KBM-7 (cell line): ENCODE measurements at regions of chr6 and their contacts with region 1.

Region 1: GRCh38 chr6:130885392-130886192 is 58.4 kb downstream of the SMLR1 start:
- DNase-seq: peak; percentile 81

Region 2: GRCh38 chr6:130587778-130588520 is 297.6 kb before region 1 on chr6:
- in situ Hi-C with region 1: no loop called
- DNase-seq: no peak

Region 3: DNA sequence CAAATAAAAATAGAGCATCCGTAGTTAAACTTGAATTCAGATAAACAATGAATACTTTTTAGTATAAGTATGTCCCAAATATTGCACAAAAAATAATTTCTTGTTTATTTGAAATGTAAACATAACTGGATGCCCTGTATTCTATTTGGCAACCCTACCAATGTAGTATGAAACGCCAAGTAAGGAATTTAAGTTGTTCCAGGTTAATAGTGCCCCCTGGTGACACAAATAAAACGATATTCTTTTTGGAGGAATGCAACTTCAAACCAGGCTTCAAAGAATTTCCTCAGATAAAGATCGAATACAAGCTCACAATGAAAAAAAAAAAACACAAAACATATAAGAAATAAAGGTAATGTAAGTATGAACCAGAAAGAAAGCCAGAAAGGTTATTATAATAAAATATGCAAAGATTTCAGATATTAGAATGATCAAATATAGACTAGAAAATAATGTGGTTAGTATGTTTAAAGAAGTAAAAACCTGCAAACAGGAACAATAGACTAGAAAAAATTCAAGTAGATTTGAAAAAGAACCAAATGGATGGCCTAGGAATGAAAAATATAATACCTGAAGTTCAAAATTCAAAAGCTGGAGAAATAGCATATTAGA is 231.3 kb after region 1 on chr6:
- in situ Hi-C with region 1: loop called (anchors 25 kb)
- DNase-seq: peak; percentile 74